ENCODE measurements at regions of chr10 and their contacts with region 1.

Region 1: GRCh38 chr10:100338434-100339036 is 8.5 kb upstream of the SCD start:
- DNase-seq: peak; percentile 60
- ATAC-seq: peak; percentile 22; the same call in 2 of the 3 replicates
- H3K4me3 ChIP-seq: no peak overlapping the region
- H3K27ac ChIP-seq: no peak overlapping the region
- H3K4me1 ChIP-seq: peaks cover 52% of the 10 kb centered on the region
- H3K27me3 ChIP-seq: no peaks in the 10 kb centered on the region
- CTCF ChIP-seq: peak; percentile 91
- EP300 ChIP-seq: no peak
- POLR2A ChIP-seq: no peak
- RAD21 ChIP-seq: peak; percentile 86

Region 2: GRCh38 chr10:100359529-100360150 is 21.1 kb after region 1 on chr10:
- CTCF ChIA-PET with region 1: interaction called, 3 read pairs
- POLR2A ChIA-PET with region 1: interaction called, 38 read pairs
- in situ Hi-C with region 1: no loop called
- intact Hi-C with region 1: no loop called
- DNase-seq: peak; percentile 79
- ATAC-seq: peak; percentile 56
- H3K4me3 ChIP-seq: no peak overlapping the region; a peak in 1 of 6 replicates
- H3K27ac ChIP-seq: peak overlapping the region; percentile 63
- H3K4me1 ChIP-seq: peaks cover 100% of the 10 kb centered on the region
- H3K27me3 ChIP-seq: no peaks in the 10 kb centered on the region
- CTCF ChIP-seq: no peak
- EP300 ChIP-seq: peak in 1 of 2 experiments; percentile 74; a peak in 1 of 4 replicates
- POLR2A ChIP-seq: peak in 1 of 2 experiments; percentile 1; a peak in 1 of 4 replicates
- RAD21 ChIP-seq: 0 out of 2 replicates have a peak, but pooled peaks have one; percentile 20

Region 3: GRCh38 chr10:100419911-100420449 is 81.4 kb after region 1 on chr10:
- CTCF ChIA-PET with region 1: no interaction called
- POLR2A ChIA-PET with region 1: interaction called, 5 read pairs
- in situ Hi-C with region 1: no loop called
- intact Hi-C with region 1: loop called (anchors 2 kb)
- DNase-seq: no peak
- ATAC-seq: no peak
- H3K4me3 ChIP-seq: no peak overlapping the region
- H3K27ac ChIP-seq: no peak overlapping the region
- H3K4me1 ChIP-seq: peaks cover 13% of the 10 kb centered on the region
- H3K27me3 ChIP-seq: no peaks in the 10 kb centered on the region; a peak in 1 of 5 replicates
- CTCF ChIP-seq: no peak
- EP300 ChIP-seq: no peak
- POLR2A ChIP-seq: no peak
- RAD21 ChIP-seq: no peak

Region 4: GRCh38 chr10:100508691-100509150 is 170.2 kb after region 1 on chr10:
- CTCF ChIA-PET with region 1: interaction called, 7 read pairs
- POLR2A ChIA-PET with region 1: no interaction called
- in situ Hi-C with region 1: loop called (anchors 5 kb)
- intact Hi-C with region 1: loop called (anchors 2 kb)
- DNase-seq: peak; percentile 56
- ATAC-seq: peak; percentile 93
- H3K4me3 ChIP-seq: no peak overlapping the region
- H3K27ac ChIP-seq: no peak overlapping the region
- H3K4me1 ChIP-seq: peaks cover 7% of the 10 kb centered on the region; the same call in 1 of the 2 replicates
- H3K27me3 ChIP-seq: no peaks in the 10 kb centered on the region
- CTCF ChIP-seq: peak; percentile 77
- EP300 ChIP-seq: no peak
- POLR2A ChIP-seq: no peak
- RAD21 ChIP-seq: peak; percentile 69

Region 5: GRCh38 chr10:100817268-100817839 is 478.8 kb after region 1 on chr10:
- CTCF ChIA-PET with region 1: no interaction called
- POLR2A ChIA-PET with region 1: no interaction called
- in situ Hi-C with region 1: no loop called
- intact Hi-C with region 1: no loop called
- DNase-seq: no peak
- ATAC-seq: peak; percentile 84
- H3K4me3 ChIP-seq: no peak overlapping the region
- H3K27ac ChIP-seq: no peak overlapping the region
- H3K4me1 ChIP-seq: peaks cover 10% of the 10 kb centered on the region
- H3K27me3 ChIP-seq: peaks cover 5 to 40% of the 10 kb centered on the region in 2 experiments; a peak in 4 of 5 replicates
- CTCF ChIP-seq: peak; percentile 63
- EP300 ChIP-seq: no peak
- POLR2A ChIP-seq: no peak
- RAD21 ChIP-seq: no peak